Mammary epithelial cell (primary cell): ENCODE measurements at regions of chr21 and their contacts with region 1.

Region 1: GRCh38 chr21:36927719-36928117 is 38.8 kb downstream of the HLCS start:
- DNase-seq: peak; percentile 60
- H3K4me3 ChIP-seq: no peak overlapping the region
- H3K27ac ChIP-seq: no peak overlapping the region
- H3K4me1 ChIP-seq: peaks cover 10% of the 10 kb centered on the region
- H3K27me3 ChIP-seq: no peaks in the 10 kb centered on the region
- CTCF ChIP-seq: peak; percentile 94 to 96

Region 2: GRCh38 chr21:36429947-36430546 is 497.7 kb before region 1 on chr21:
- CTCF ChIA-PET with region 1: no interaction called
- dilution Hi-C with region 1: no loop called
- in situ Hi-C with region 1: loop called in 1 of 2 experiments (anchors 10 kb)
- intact Hi-C with region 1: no loop called
- DNase-seq: peak; percentile 100
- H3K4me3 ChIP-seq: peak overlapping the region in 2 of 3 experiments; percentile 10 to 27
- H3K27ac ChIP-seq: peak overlapping the region; percentile 83
- H3K4me1 ChIP-seq: peaks cover 35% of the 10 kb centered on the region
- H3K27me3 ChIP-seq: no peaks in the 10 kb centered on the region
- CTCF ChIP-seq: peak in 1 of 2 donors; percentile 22

Region 3: DNA sequence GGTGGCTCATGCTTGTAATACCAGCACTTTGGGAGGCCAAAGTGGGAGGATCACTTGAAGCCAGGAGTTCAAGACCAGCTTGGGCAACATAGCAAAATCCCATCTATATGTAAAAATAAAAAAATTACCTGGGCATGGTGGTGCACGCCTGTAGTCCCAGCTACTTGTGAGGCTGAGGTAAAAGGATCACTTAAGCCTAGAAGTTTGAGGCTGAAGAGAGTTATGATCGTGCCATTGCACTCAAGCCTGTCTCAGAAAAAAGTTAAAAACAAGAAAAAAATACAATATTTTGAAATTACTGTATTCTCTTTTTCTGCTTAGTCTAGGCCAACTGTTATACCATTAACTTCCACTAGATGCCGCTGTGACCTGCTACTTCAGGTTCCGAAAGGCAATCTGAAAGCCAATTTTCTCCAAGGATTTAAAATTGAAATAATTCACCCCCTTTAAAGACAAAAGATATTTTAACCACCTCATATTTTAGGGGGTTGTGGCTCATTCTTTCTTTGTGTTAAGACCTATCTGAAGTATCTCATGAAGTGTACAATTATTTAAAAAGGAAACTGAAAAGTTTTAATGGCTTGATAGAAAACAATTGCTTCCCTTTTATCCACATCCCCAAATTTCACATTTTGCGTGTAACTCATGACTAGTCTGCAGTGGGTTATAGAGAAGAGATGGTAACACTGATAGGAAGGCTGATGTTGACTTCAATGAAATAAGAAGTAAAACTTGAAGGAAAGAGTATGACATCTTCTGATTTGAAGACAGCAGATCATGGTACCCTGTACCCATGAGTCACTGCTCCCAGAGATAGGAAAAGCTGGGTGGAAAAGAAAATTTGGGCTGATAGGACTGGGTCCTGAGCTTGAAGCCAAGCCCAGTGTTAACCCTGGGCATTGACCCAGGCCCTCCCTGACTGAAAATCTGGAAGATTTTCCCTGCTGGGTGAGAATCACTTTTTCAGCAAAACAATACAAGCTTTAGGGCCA is 423.4 kb before region 1 on chr21:
- CTCF ChIA-PET with region 1: no interaction called
- dilution Hi-C with region 1: no loop called
- in situ Hi-C with region 1: loop called in 1 of 2 experiments (anchors 10 kb)
- intact Hi-C with region 1: loop called (anchors 1 kb)
- DNase-seq: peak; percentile 11
- H3K4me3 ChIP-seq: no peak overlapping the region
- H3K27ac ChIP-seq: no peak overlapping the region
- H3K4me1 ChIP-seq: peaks cover 9% of the 10 kb centered on the region
- H3K27me3 ChIP-seq: no peaks in the 10 kb centered on the region
- CTCF ChIP-seq: peak; percentile 78 to 86

Region 4: GRCh38 chr21:36661511-36662309 is 266.0 kb before region 1 on chr21:
- CTCF ChIA-PET with region 1: interaction called, 7 read pairs
- dilution Hi-C with region 1: no loop called
- in situ Hi-C with region 1: no loop called
- intact Hi-C with region 1: loop called (anchors 1 kb)
- DNase-seq: no peak
- H3K4me3 ChIP-seq: no peak overlapping the region
- H3K27ac ChIP-seq: no peak overlapping the region
- H3K4me1 ChIP-seq: no peaks in the 10 kb centered on the region
- H3K27me3 ChIP-seq: peaks cover 2% of the 10 kb centered on the region
- CTCF ChIP-seq: peak; percentile 42 to 54

Region 5: GRCh38 chr21:36747815-36748383 is 179.8 kb before region 1 on chr21:
- CTCF ChIA-PET with region 1: interaction called, 5 read pairs
- dilution Hi-C with region 1: no loop called
- in situ Hi-C with region 1: no loop called
- intact Hi-C with region 1: loop called (anchors 5 kb)
- DNase-seq: no peak
- H3K4me3 ChIP-seq: peak overlapping the region in 2 of 3 experiments; percentile 23 to 36
- H3K27ac ChIP-seq: no peak overlapping the region
- H3K4me1 ChIP-seq: peaks cover 3% of the 10 kb centered on the region
- H3K27me3 ChIP-seq: no peaks in the 10 kb centered on the region
- CTCF ChIP-seq: peak in 1 of 2 donors; percentile 4

Region 6: GRCh38 chr21:36859744-36860501 is 67.8 kb before region 1 on chr21:
- CTCF ChIA-PET with region 1: interaction called, 4 read pairs
- dilution Hi-C with region 1: no loop called
- in situ Hi-C with region 1: loop called in 1 of 2 experiments (anchors 10 kb)
- intact Hi-C with region 1: no loop called
- DNase-seq: peak; percentile 21
- H3K4me3 ChIP-seq: no peak overlapping the region
- H3K27ac ChIP-seq: peak overlapping the region; percentile 77
- H3K4me1 ChIP-seq: peaks cover 20% of the 10 kb centered on the region
- H3K27me3 ChIP-seq: no peaks in the 10 kb centered on the region
- CTCF ChIP-seq: no peak

Region 7: DNA sequence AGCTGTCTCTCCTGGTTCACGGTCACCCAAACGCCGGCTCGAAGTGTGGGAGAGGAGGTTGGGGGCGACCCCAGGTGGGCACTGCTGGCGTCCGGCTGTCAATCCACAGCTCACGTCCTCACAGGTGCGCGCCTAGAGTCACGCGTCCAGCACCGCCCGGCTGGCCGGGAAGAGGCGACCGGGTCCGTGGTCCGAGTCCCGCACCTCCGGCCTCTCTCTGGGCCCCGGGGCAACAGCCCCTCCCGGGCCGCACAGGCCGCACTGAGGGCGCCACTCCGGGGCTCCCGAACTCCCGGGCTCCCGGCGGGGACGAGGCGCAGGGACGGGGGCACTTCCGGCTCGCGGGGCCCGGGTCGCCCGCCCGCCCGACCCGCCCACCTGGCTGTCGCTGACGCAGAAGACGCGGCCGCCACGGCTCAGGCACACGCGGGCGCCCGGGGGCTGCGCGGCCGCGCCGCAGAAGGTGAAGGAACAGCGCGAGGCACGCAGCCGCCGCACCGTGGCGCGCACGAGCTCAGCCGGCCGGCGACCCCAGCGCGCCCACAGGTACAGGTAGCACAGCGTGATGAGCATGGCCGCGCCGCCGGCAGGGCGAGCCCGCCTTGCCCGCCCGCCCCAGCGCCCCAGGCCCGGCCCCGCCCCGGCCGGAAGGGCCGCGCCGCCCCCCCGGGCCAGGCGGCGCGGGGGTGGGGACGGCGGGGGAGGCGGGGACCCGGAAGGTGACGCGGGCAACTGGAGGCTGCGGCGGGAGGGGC is 38.5 kb after region 1 on chr21 and contains the start of gene HLCS:
- CTCF ChIA-PET with region 1: no interaction called
- dilution Hi-C with region 1: no loop called
- in situ Hi-C with region 1: no loop called
- intact Hi-C with region 1: no loop called
- DNase-seq: peak; percentile 69
- H3K4me3 ChIP-seq: peak within 1 kb of the TSS; percentile 79 to 87 (median 87)
- H3K27ac ChIP-seq: peak within 1 kb of the TSS; percentile 43
- H3K4me1 ChIP-seq: peaks cover 9% of the 10 kb centered on the region
- H3K27me3 ChIP-seq: no peaks in the 10 kb centered on the region
- CTCF ChIP-seq: peak; percentile 21 to 36
- total RNA-seq, gene HLCS: 32.4 to 42.5 TPM

Region 8: GRCh38 chr21:37009740-37010341 is 82.1 kb after region 1 on chr21:
- CTCF ChIA-PET with region 1: no interaction called
- dilution Hi-C with region 1: no loop called
- in situ Hi-C with region 1: no loop called
- intact Hi-C with region 1: loop called (anchors 5 kb)
- DNase-seq: peak; percentile 71
- H3K4me3 ChIP-seq: peak overlapping the region; percentile 32 to 41 (median 35)
- H3K27ac ChIP-seq: no peak overlapping the region
- H3K4me1 ChIP-seq: peaks cover 4% of the 10 kb centered on the region
- H3K27me3 ChIP-seq: no peaks in the 10 kb centered on the region
- CTCF ChIP-seq: peak; percentile 80 to 89